Pancreas (tissue), 10 donors: ENCODE measurements at regions of chr11 and their contacts with region 1.

Region 1: GRCh38 chr11:67572747-67573419 is 10.7 kb upstream of the GSTP1 start:
- DNase-seq: peak in 5 of 6 donors; percentile 67 to 84 (median 70)
- ATAC-seq: peak; percentile 65 to 90 (median 82)
- H3K4me3 ChIP-seq: peak overlapping the region in 1 of 4 donors; percentile 14
- H3K27ac ChIP-seq: peak overlapping the region in 2 of 4 donors; percentile 5 to 36
- H3K4me1 ChIP-seq: no peaks in the 10 kb centered on the region
- H3K27me3 ChIP-seq: no peaks in the 10 kb centered on the region
- CTCF ChIP-seq: peak; percentile 71 to 77 (median 74)

Region 2: GRCh38 chr11:67606492-67607201 is 33.8 kb after region 1 on chr11 and contains the start of gene NDUFV1:
- intact Hi-C with region 1: loop called in 1 of 3 experiments (anchors 5 kb)
- DNase-seq: peak; percentile 96 to 99 (median 98)
- ATAC-seq: peak; percentile 99
- H3K4me3 ChIP-seq: peak within 1 kb of the TSS; percentile 90 to 99 (median 98)
- H3K27ac ChIP-seq: peak within 1 kb of the TSS; percentile 28 to 65 (median 54)
- H3K4me1 ChIP-seq: peaks cover 0 to 10% (median 0%) of the 10 kb centered on the region in 3 donors
- H3K27me3 ChIP-seq: no peaks in the 10 kb centered on the region
- CTCF ChIP-seq: peak; percentile 38 to 71 (median 60)
- total RNA-seq, gene NDUFV1: 82.5 to 126 (median 109) TPM